ENCODE measurements at regions of chr6 and their contacts with region 1.

Region 1: GRCh38 chr6:129498950-129499842 is 210.8 kb downstream of the ARHGAP18 start:
- DNase-seq: peak; percentile 29 to 62 (median 55)
- H3K4me3 ChIP-seq: no peak overlapping the region
- H3K4me3 Mint-ChIP-seq: peak overlapping the region; percentile 37 to 89 (median 76)
- H3K27ac ChIP-seq: no peak overlapping the region
- H3K27ac Mint-ChIP-seq: peak overlapping the region in 5 of 7 donors; percentile 1 to 50 (median 19)
- H3K4me1 ChIP-seq: peaks cover 21% of the 10 kb centered on the region
- H3K4me1 Mint-ChIP-seq: peaks cover 15 to 24% (median 19%) of the 10 kb centered on the region in 4 donors
- H3K27me3 ChIP-seq: no peaks in the 10 kb centered on the region
- H3K27me3 Mint-ChIP-seq: no peaks in the 10 kb centered on the region

Region 2: DNA sequence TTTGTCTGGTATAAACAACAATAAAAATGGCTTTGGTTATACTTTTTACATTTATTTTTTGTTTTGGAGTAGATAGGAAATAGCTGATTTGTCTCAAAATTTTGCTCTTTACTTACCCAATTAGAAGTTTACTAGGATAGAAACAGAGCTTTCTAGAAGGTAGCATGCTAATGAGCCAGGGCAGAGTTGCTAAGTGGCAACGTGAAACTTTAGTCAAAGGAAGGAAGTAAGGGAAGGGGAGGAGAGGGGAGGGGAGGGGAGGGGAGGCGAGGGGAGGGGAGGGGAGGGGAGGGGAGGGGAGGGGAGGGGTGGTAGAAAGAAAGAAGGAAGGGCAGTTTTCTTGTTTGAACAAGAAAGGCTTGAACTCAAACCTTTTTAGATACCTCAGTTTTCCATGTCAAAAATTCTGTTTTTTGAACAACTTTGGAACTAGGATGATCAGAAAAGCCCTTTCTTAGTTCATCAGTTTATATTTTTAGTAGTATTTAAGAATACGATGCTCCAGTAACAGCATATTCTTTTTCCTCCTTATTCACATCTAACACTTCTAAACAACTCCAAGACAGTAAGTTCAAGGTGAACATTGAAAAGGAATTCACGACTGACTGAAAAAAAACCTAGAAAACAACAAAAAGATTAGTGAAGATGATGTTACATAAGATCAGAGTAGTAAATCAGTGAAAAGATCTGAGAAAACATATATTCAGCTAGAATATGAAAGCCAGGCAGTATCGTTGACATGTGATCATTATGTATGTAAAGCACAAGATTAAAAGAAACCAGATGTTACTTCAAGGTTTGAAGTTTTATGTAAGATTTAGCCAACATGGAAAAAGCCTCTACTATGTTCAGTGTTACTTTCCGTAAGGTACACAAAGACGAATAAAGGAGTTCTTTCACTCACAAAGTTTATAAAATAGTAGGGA is 52.7 kb before region 1 on chr6:
- CTCF ChIA-PET with region 1: no interaction called
- POLR2A ChIA-PET with region 1: no interaction called
- intact Hi-C with region 1: no loop called
- DNase-seq: peak in 1 of 5 donors; percentile 1
- H3K4me3 ChIP-seq: no peak overlapping the region
- H3K4me3 Mint-ChIP-seq: peak overlapping the region in 3 of 8 donors; percentile 2 to 16 (median 3)
- H3K27ac ChIP-seq: no peak overlapping the region
- H3K27ac Mint-ChIP-seq: peak overlapping the region in 2 of 7 donors; percentile 23 to 59
- H3K4me1 ChIP-seq: peaks cover 6% of the 10 kb centered on the region
- H3K4me1 Mint-ChIP-seq: peaks cover 12 to 38% (median 16%) of the 10 kb centered on the region in 4 donors
- H3K27me3 ChIP-seq: no peaks in the 10 kb centered on the region
- H3K27me3 Mint-ChIP-seq: no peaks in the 10 kb centered on the region

Region 3: GRCh38 chr6:129575378-129576118 is 76.4 kb after region 1 on chr6:
- CTCF ChIA-PET with region 1: interaction called, 20 read pairs
- POLR2A ChIA-PET with region 1: no interaction called
- intact Hi-C with region 1: loop called (anchors 1 kb)
- DNase-seq: peak in 4 of 5 donors; percentile 14 to 30 (median 18)
- H3K4me3 ChIP-seq: no peak overlapping the region
- H3K4me3 Mint-ChIP-seq: peak overlapping the region; percentile 15 to 64 (median 50)
- H3K27ac ChIP-seq: no peak overlapping the region
- H3K27ac Mint-ChIP-seq: peak overlapping the region in 1 of 7 donors; percentile 57
- H3K4me1 ChIP-seq: no peaks in the 10 kb centered on the region
- H3K4me1 Mint-ChIP-seq: peaks cover 3 to 8% (median 7%) of the 10 kb centered on the region in 4 donors
- H3K27me3 ChIP-seq: no peaks in the 10 kb centered on the region
- H3K27me3 Mint-ChIP-seq: no peaks in the 10 kb centered on the region

Region 4: GRCh38 chr6:129632172-129632613 is 133.0 kb after region 1 on chr6:
- CTCF ChIA-PET with region 1: no interaction called
- POLR2A ChIA-PET with region 1: no interaction called
- intact Hi-C with region 1: no loop called
- DNase-seq: no peak
- H3K4me3 ChIP-seq: no peak overlapping the region
- H3K4me3 Mint-ChIP-seq: no peak overlapping the region
- H3K27ac ChIP-seq: no peak overlapping the region
- H3K27ac Mint-ChIP-seq: no peak overlapping the region
- H3K4me1 ChIP-seq: no peaks in the 10 kb centered on the region
- H3K4me1 Mint-ChIP-seq: peaks cover 0 to 5% (median under 1%) of the 10 kb centered on the region in 4 donors
- H3K27me3 ChIP-seq: no peaks in the 10 kb centered on the region
- H3K27me3 Mint-ChIP-seq: no peaks in the 10 kb centered on the region

Region 5: DNA sequence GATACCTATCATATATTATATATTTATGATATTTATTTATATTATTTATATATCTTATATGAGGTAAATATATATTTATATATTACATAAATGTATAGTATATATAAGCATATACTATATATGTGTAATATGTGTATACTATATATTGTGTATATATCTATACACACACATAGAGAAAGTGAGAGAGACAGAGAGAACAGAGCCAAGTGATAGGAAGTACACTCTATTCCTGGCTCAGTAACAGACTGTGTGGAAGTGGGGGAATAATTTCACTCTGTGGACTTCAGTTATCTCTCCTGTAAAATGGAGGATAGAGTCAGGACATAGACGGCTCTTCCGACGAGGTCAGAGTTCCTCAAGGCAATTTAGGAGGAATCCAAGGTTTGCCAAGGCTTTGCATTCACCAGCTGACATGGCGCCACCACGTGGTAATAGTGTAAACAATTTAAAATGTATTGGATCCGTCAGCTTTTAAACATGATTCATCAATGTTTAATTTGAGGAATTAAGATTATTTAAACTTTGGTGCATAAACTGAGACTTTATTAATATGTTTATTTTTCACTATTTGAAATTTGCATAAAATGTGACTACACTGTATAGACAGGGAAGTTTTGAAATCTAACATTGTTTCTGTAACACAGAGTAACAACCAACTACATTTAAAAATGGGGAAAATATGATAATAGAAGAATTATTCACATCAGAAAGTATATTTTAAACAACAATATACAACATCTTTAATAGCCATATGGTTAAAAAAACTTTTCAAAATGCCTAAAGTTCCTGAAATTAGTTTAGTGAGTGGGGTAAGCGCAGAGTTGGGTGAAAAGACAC is 437.4 kb after region 1 on chr6:
- CTCF ChIA-PET with region 1: interaction called, 11 read pairs
- POLR2A ChIA-PET with region 1: no interaction called
- intact Hi-C with region 1: loop called (anchors 1 kb)
- DNase-seq: peak in 4 of 5 donors; percentile 25 to 39 (median 34)
- H3K4me3 ChIP-seq: no peak overlapping the region
- H3K4me3 Mint-ChIP-seq: peak overlapping the region in 2 of 8 donors; percentile 38 to 79
- H3K27ac ChIP-seq: no peak overlapping the region
- H3K27ac Mint-ChIP-seq: no peak overlapping the region
- H3K4me1 ChIP-seq: no peaks in the 10 kb centered on the region
- H3K4me1 Mint-ChIP-seq: peaks cover 0 to 4% (median 1%) of the 10 kb centered on the region in 4 donors
- H3K27me3 ChIP-seq: peaks cover 4% of the 10 kb centered on the region
- H3K27me3 Mint-ChIP-seq: peaks cover 11 to 15% of the 10 kb centered on the region in 2 donors

Measured in CD4-positive, alpha-beta memory T cell (primary cell).